PC-9 (cell line): ENCODE measurements at regions of chr1 and their contacts with region 1.

Region 1: GRCh38 chr1:113042285-113043143 is 30.5 kb upstream of the LRIG2 start:
- DNase-seq: peak; percentile 71 to 74
- H3K4me3 ChIP-seq: no peak overlapping the region
- H3K27ac ChIP-seq: no peak overlapping the region
- H3K4me1 ChIP-seq: peaks cover 18% of the 10 kb centered on the region
- H3K27me3 ChIP-seq: no peaks in the 10 kb centered on the region
- CTCF ChIP-seq: peak; percentile 82

Region 2: GRCh38 chr1:112809253-112809684 is 233.2 kb before region 1 on chr1:
- CTCF ChIA-PET with region 1: interaction called, 3 read pairs
- POLR2A ChIA-PET with region 1: no interaction called
- intact Hi-C with region 1: loop called (anchors 1 kb)
- DNase-seq: peak; percentile 49 to 79
- H3K4me3 ChIP-seq: no peak overlapping the region
- H3K27ac ChIP-seq: no peak overlapping the region
- H3K4me1 ChIP-seq: peaks cover 21% of the 10 kb centered on the region
- H3K27me3 ChIP-seq: no peaks in the 10 kb centered on the region
- CTCF ChIP-seq: peak; percentile 98

Region 3: DNA sequence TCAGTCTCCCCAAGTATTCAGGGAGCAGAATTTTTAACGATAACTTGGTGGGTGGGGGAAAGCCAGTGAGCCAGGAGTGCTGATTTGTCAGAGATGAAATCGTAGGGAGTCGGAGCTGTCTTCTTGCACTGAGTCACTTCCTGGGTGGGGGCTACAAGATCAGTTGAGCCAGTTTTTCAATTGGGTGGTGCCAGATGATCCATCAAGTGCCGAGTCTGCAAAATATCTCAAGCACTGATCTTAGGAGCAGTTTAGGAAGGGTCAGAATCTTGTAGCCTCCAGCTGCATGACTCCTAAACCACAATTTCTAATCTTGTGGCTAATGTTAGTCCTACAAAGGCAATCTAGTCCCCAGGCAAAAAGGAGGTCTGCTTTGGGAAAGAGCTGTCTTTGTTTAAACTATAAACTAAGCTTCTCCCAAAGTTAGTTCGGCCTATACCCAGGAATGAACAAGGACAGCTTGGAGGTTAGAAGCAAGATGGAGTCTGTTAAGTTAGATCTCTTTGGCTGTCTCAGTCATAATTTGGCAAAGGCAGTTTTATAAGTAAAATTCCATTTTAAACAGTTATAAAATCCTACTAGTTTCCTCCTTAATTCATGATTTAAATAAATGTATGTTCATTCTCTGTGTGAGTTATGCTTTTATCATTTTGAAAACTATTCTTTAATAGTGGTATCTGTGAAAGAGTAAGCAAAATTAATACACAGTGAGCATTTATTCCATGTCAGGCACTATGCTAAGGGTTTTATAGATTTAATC is 138.3 kb before region 1 on chr1:
- CTCF ChIA-PET with region 1: interaction called, 11 read pairs
- POLR2A ChIA-PET with region 1: interaction called, 4 read pairs
- intact Hi-C with region 1: no loop called
- DNase-seq: peak; percentile 72 to 99
- H3K4me3 ChIP-seq: peak overlapping the region; percentile 33; the same call in 1 of the 2 replicates
- H3K27ac ChIP-seq: peak overlapping the region; percentile 84
- H3K4me1 ChIP-seq: peaks cover 65% of the 10 kb centered on the region
- H3K27me3 ChIP-seq: no peaks in the 10 kb centered on the region
- CTCF ChIP-seq: no peak

Region 4: DNA sequence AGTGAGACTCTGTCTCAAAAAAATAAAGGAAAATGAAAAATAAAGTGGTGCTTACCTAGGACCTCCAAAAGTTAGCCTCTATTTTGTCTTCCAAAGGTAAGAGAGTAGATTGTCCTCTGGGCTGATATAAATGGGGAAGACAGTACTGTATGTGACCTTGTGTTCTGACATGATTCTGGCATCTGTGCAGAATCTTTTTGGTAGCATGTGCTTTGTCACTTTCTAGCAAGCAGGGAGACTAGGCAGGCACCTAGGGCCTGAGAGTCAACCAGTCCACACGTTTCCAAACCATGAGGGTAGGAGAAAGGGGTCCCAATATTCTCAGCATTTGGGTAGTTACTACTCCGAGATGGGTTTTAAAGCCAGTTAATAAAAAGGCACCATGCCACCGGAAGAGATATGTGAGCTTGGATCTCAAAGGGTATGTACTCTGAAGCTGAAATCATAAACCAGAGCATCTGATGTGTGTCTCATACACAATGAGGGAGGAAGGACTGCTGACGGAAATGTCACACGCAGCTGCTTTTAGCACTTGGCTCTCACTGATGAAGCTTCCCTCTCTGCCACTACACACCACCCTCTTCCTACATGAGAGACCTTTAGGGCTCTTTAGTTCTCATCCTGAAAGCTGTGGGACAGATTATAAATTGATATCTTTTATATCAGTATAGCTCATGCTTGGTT is 59.5 kb before region 1 on chr1:
- CTCF ChIA-PET with region 1: interaction called, 11 read pairs
- POLR2A ChIA-PET with region 1: no interaction called
- intact Hi-C with region 1: no loop called
- DNase-seq: no peak
- H3K4me3 ChIP-seq: no peak overlapping the region
- H3K27ac ChIP-seq: no peak overlapping the region
- H3K4me1 ChIP-seq: no peaks in the 10 kb centered on the region
- H3K27me3 ChIP-seq: no peaks in the 10 kb centered on the region
- CTCF ChIP-seq: no peak

Region 5: GRCh38 chr1:113072757-113073478 is 30.4 kb after region 1 on chr1 and contains the start of gene LRIG2:
- CTCF ChIA-PET with region 1: interaction called, 16 read pairs
- POLR2A ChIA-PET with region 1: interaction called, 5 read pairs
- intact Hi-C with region 1: loop called (anchors 2 kb)
- DNase-seq: peak; percentile 99
- H3K4me3 ChIP-seq: peak within 1 kb of the TSS; percentile 85
- H3K27ac ChIP-seq: peak within 1 kb of the TSS; percentile 78
- H3K4me1 ChIP-seq: peaks cover 20% of the 10 kb centered on the region
- H3K27me3 ChIP-seq: no peaks in the 10 kb centered on the region
- CTCF ChIP-seq: peak; percentile 94
- total RNA-seq, gene LRIG2: 9.4 and 10.6 TPM in 2 replicates